ENCODE measurements at regions of chr20 and their contacts with region 1.

Region 1: DNA sequence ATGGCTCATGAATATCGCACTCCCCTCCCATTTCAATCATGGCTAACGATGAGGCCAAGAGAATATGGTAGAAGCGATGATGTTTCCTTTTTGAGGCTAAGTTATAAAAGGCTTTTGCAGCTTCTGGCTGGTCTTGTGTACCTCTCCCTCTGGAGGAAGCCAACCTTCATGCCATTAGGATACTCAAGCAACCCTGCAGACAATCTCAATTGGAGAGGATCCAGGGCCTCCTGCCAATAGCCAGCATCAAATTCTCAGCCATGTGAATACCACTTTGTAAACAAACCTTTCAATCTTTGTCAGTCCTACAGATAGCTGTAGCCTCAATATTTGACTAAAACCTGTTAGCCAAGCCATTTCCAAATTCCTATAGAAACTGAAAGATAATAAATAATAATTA is 738.4 kb downstream of the KIF16B start:
- DNase-seq: peak; percentile 14
- H3K4me3 ChIP-seq: no peak overlapping the region
- H3K27ac ChIP-seq: no peak overlapping the region
- H3K4me1 ChIP-seq: peaks cover 9% of the 10 kb centered on the region
- H3K27me3 ChIP-seq: no peaks in the 10 kb centered on the region
- CTCF ChIP-seq: no peak

Region 2: GRCh38 chr20:15708984-15709598 is 125.8 kb before region 1 on chr20:
- CTCF ChIA-PET with region 1: interaction called, 3 read pairs
- dilution Hi-C with region 1: no loop called
- in situ Hi-C with region 1: no loop called
- intact Hi-C with region 1: loop called (anchors 10 kb)
- DNase-seq: no peak
- H3K4me3 ChIP-seq: no peak overlapping the region
- H3K27ac ChIP-seq: no peak overlapping the region
- H3K4me1 ChIP-seq: peaks cover 7% of the 10 kb centered on the region
- H3K27me3 ChIP-seq: no peaks in the 10 kb centered on the region
- CTCF ChIP-seq: peak; percentile 21 to 43

Region 3: DNA sequence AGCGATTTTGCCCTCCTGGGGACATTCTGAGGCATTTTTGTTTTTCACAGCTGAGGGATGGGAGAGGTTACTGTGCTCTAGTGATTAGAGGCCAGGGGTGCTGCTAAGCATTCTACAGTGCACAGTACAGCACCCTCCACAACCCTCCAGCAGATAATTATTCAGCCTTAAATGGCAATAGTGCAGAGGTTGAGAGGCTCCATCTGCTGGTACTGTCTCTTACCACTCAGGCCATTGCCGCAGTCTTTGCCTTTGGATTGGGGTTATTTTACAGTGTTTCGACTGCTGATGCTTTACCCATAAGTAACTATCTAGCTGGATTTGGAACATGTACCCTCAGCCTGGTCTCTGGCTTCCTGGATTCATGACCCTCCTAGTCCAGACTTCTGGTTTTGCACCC is 33.0 kb after region 1 on chr20:
- CTCF ChIA-PET with region 1: no interaction called
- dilution Hi-C with region 1: no loop called
- in situ Hi-C with region 1: no loop called
- intact Hi-C with region 1: no loop called
- DNase-seq: no peak
- H3K4me3 ChIP-seq: no peak overlapping the region
- H3K27ac ChIP-seq: no peak overlapping the region
- H3K4me1 ChIP-seq: no peaks in the 10 kb centered on the region
- H3K27me3 ChIP-seq: no peaks in the 10 kb centered on the region
- CTCF ChIP-seq: peak; percentile 25 to 57

Measured in mammary epithelial cell (primary cell).